ENCODE measurements at regions of chr19 and their contacts with region 1.

Region 1: GRCh38 chr19:12777217-12778016 is 2.1 kb upstream of the HOOK2 start:
- DNase-seq: peak in 1 of 2 donors; percentile 66
- ATAC-seq: peak; percentile 28 to 38
- H3K4me3 ChIP-seq: peak overlapping the region; percentile 58 to 76 (median 70)
- H3K27ac ChIP-seq: peak overlapping the region; percentile 87 to 94 (median 92)
- H3K4me1 ChIP-seq: peaks cover 44 to 57% of the 10 kb centered on the region in 2 donors
- H3K27me3 ChIP-seq: no peaks in the 10 kb centered on the region
- CTCF ChIP-seq: peak; percentile 93 to 98 (median 96)
- POLR2A ChIP-seq: no peak

Region 2: DNA sequence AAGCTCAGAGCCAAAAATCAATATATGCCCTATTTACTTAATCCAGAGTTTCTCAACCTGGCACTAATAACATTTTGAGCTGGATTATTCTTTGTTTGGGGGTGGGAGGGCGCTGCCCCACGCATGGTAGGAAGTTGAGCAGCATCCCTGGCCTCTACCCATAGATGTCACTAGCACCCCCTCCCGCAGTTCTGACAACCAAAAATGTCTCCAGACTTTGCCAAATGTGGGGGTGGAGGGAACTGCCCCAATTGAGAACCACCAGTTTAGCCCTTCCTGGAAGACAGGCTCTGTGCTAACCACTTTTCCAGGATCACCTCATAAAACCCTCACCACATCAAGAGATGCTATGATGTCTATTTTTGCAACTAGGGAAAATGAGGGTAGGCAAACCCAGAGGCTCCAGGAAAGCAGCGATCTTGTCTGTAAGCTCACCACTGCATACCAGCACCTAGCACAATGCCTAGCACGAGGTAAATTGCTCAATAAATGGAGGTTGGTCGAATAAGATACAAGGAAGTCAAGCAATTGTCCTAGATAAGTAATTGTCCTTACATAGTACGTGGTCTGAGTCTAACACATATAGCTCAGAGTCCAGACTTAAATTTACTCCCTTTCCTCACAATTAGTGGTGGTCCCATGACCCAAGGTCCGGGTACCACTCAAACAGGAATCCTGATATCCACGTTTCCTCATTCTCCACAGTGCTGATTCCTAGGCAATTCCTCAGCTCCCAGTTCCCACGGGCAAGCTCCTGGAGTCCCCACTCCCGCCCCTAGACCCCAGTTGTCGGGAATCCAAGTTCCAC is 43.8 kb before region 1 on chr19:
- in situ Hi-C with region 1: no loop called
- intact Hi-C with region 1: no loop called
- DNase-seq: no peak
- ATAC-seq: no peak
- H3K4me3 ChIP-seq: peak overlapping the region; percentile 94 to 100 (median 96)
- H3K27ac ChIP-seq: peak overlapping the region; percentile 89 to 99 (median 98)
- H3K4me1 ChIP-seq: peaks cover 30 to 42% of the 10 kb centered on the region in 2 donors
- H3K27me3 ChIP-seq: no peaks in the 10 kb centered on the region
- CTCF ChIP-seq: peak in 1 of 5 experiments; percentile 17
- POLR2A ChIP-seq: no peak

Region 3: DNA sequence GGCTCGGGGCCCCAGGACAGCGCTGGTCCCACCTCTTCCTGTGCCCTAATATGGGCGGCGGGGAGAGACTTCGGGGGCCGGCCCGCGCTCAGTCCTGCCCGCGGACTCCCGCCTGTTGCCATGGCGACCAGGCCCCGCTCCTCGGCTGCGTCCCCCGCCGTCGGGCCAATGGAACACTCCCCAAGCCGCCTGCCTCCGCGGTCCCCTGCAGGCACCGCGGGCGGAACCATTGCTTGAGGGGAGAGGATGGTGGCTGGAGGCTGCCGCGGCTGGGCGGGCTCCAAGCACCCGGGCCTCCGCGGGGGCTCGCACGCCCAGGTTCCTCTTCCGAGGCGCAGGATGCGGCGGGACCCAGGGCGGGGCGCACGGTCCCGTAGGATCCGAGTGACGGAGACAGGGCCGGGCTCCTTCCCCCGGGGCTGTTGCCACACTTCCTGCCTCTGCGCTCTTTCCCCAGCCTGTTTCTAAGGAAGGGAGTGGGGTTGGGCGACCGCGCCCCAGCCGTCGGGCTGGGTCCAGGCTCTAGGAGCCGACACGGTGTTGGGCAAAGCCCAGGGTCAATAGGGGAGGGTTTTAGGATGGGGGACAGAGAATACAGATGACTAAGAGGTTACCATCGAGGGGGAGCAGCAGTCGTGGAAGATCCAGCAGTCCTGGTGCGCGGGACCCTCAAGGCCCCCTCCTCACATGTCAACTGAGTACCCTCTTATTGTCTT is 12.6 kb after region 1 on chr19:
- in situ Hi-C with region 1: no loop called
- intact Hi-C with region 1: loop called (anchors 1 kb)
- DNase-seq: peak; percentile 89 to 90
- ATAC-seq: peak; percentile 32 to 34
- H3K4me3 ChIP-seq: peak overlapping the region; percentile 91 to 98 (median 94)
- H3K27ac ChIP-seq: peak overlapping the region; percentile 99 to 100 (median 100)
- H3K4me1 ChIP-seq: peaks cover 45 to 46% of the 10 kb centered on the region in 2 donors
- H3K27me3 ChIP-seq: no peaks in the 10 kb centered on the region
- CTCF ChIP-seq: no peak
- POLR2A ChIP-seq: peak; percentile 88 to 93

Region 4: DNA sequence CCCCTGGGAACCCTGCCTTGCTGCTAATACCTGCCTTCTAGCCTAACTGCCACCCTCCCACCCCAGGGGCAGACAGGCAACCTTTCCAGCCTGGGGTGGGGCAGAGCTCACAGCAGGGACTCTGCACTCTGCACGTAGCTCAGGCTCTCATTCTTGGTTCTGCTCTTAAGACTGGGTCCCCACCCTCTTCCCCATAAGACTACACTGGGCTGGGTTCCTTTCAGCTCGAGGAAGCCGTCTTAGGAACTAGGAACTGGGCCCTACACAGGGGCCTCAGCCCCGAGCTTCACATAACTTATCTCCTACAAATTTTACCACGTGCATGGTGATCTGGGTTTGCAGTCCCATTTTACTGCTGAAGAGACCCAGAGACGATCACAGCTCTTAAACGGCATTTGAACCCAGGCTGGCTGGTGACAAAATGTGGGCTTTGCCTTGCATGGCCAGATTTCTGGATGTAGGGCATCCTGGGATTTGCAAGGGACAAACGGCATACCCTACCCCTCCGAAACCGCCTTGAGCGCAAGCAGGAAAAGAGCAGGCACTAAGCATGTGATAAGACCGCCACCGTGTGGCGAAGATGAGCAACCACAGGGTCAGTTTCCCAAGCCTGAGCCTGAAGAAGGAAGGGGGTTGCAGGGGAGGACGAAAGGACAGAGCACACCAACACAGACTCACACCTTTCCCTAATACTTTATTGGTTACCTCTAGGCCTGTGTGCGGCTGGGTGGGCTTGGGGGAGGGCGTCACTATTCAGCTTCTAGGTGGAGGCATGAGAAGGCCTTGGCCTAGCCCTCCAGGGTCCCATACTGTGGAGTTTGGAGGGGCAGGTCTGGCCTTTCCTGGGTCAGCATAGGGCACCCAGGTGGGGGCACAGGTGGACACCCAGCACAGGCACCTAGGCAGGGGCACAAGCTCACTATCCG is 19.0 kb after region 1 on chr19:
- in situ Hi-C with region 1: no loop called
- intact Hi-C with region 1: loop called (anchors 1 kb)
- DNase-seq: peak in 1 of 2 donors; percentile 66
- ATAC-seq: peak in 1 of 2 donors; percentile 9
- H3K4me3 ChIP-seq: no peak overlapping the region
- H3K27ac ChIP-seq: peak overlapping the region; percentile 20 to 47 (median 38)
- H3K4me1 ChIP-seq: peaks cover 16 to 24% of the 10 kb centered on the region in 2 donors
- H3K27me3 ChIP-seq: no peaks in the 10 kb centered on the region
- CTCF ChIP-seq: peak; percentile 93 to 98 (median 97)
- POLR2A ChIP-seq: no peak

Measured in gastrocnemius medialis (tissue), 4 donors.